ENCODE measurements at regions of chr22 and their contacts with region 1.

Region 1: GRCh38 chr22:19717691-19718455 is 3.6 kb downstream of the SEPTIN5 start:
- DNase-seq: peak; percentile 79
- H3K4me3 Mint-ChIP-seq: peak overlapping the region; percentile 80
- H3K27ac Mint-ChIP-seq: no peak overlapping the region
- H3K4me1 Mint-ChIP-seq: peaks cover 5% of the 10 kb centered on the region
- H3K27me3 Mint-ChIP-seq: peaks cover 43% of the 10 kb centered on the region

Region 2: DNA sequence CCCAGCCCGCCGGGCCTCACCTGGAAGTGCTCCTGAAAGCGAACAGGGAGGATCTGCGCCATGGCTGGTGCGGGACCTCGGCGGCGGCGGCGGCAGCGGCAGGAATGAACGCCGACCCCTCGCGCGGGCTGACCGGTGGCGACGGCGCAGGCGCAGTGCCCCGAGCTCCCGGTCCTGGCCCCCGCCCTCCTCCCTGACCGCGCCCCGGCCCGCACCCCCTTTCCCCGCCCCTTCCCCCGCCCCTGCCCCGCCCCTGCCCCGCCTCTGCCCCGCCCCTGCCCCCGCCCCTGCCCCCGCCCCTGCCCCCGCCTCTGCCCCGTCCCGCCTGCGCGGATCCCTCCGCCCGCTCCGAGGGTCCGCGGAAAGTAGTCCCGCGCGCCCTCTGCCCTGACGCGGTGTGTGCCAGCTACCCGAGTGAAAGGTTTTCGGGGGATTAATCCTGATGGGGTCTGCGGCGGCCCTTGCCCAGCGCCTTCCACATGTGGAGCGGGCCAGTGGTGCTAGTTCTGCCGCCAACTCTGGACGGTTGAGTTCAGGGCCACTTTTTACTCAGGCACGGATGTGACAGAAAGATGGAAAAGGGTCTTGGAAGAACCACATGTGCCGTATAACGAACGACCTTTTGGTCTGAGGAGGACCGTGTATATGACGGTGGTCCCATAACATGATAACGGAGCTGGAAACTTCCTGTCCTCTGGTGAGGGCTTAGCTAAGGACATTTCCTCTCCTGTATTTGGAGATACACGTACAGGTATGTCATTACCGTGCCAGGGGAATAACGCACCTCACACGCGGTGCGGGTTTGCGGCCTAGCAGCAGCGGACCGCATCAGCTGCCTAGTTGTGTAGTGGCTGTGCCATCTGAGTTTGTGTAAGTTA is 426.1 kb before region 1 on chr22 and contains the start of gene CLTCL1:
- intact Hi-C with region 1: loop called (anchors 5 kb)
- DNase-seq: peak; percentile 66
- H3K4me3 Mint-ChIP-seq: peak within 1 kb of the TSS; percentile 91
- H3K27ac Mint-ChIP-seq: peak within 1 kb of the TSS; percentile 88
- H3K4me1 Mint-ChIP-seq: peaks cover 24% of the 10 kb centered on the region
- H3K27me3 Mint-ChIP-seq: peaks cover 41% of the 10 kb centered on the region
- total RNA-seq, gene CLTCL1: 0.64 and 0.73 TPM in 2 replicates

Region 3: GRCh38 chr22:19679522-19680101 is 38.3 kb before region 1 on chr22:
- intact Hi-C with region 1: loop called (anchors 5 kb)
- DNase-seq: peak; percentile 26
- H3K4me3 Mint-ChIP-seq: no peak overlapping the region
- H3K27ac Mint-ChIP-seq: no peak overlapping the region
- H3K4me1 Mint-ChIP-seq: no peaks in the 10 kb centered on the region
- H3K27me3 Mint-ChIP-seq: peaks cover 15% of the 10 kb centered on the region

Region 4: GRCh38 chr22:20174785-20175596 is 457.1 kb after region 1 on chr22:
- intact Hi-C with region 1: no loop called
- DNase-seq: no peak
- H3K4me3 Mint-ChIP-seq: no peak overlapping the region
- H3K27ac Mint-ChIP-seq: no peak overlapping the region
- H3K4me1 Mint-ChIP-seq: no peaks in the 10 kb centered on the region
- H3K27me3 Mint-ChIP-seq: no peaks in the 10 kb centered on the region